ENCODE measurements at regions of chr5 and their contacts with region 1.

Region 1: DNA sequence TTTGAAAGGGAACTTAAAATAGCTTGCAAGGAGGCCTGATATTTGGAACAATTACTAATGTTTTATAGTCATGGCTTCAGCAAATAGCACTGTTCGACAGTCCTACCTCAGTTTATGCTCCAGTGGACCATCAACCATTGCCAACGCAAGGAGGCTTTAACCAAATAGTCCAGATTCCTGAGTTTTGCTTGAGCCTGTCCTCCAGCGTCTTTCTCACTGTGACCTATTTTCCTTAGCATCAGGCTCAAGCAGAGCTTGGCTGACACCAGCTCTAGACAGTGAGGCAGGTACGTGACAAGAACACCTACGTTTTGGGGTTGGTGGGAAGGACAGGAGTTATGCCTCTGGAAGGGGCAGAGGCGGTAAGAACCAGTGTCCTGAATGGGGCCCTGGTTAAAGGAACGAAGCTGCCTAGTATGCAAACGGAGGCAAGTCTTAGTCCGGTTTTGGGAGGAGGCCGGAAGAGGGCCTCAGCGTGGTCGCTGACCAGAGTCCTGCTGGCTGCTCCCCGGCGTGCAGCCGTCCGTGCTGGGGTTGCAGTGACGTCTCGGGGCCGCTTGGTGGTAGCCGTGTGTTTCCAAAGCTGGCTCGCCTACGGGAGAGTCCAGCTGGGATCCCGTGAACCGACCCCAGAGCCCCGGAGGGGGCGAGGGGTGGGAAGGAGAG is 998 bp upstream of the FGF18 start:
- DNase-seq: peak; percentile 94
- H3K4me3 ChIP-seq: peak overlapping the region; percentile 63
- H3K27ac ChIP-seq: no peak overlapping the region
- H3K4me1 ChIP-seq: 0 out of 2 replicates have a peak, but pooled peaks cover 6% of the 10 kb centered on the region
- H3K27me3 ChIP-seq: no peaks in the 10 kb centered on the region

Region 2: GRCh38 chr5:171534043-171534895 is 115.8 kb after region 1 on chr5:
- in situ Hi-C with region 1: no loop called
- DNase-seq: no peak
- H3K4me3 ChIP-seq: no peak overlapping the region
- H3K27ac ChIP-seq: no peak overlapping the region
- H3K4me1 ChIP-seq: peaks cover 5% of the 10 kb centered on the region; the same call in 1 of the 2 replicates
- H3K27me3 ChIP-seq: peaks cover 4% of the 10 kb centered on the region; the same call in 1 of the 2 replicates

Region 3: GRCh38 chr5:171845857-171846256 is 427.4 kb after region 1 on chr5:
- in situ Hi-C with region 1: loop called (anchors 25 kb)
- DNase-seq: peak; percentile 69
- H3K4me3 ChIP-seq: no peak overlapping the region
- H3K27ac ChIP-seq: no peak overlapping the region
- H3K4me1 ChIP-seq: peaks cover 9% of the 10 kb centered on the region
- H3K27me3 ChIP-seq: no peaks in the 10 kb centered on the region

Region 4: DNA sequence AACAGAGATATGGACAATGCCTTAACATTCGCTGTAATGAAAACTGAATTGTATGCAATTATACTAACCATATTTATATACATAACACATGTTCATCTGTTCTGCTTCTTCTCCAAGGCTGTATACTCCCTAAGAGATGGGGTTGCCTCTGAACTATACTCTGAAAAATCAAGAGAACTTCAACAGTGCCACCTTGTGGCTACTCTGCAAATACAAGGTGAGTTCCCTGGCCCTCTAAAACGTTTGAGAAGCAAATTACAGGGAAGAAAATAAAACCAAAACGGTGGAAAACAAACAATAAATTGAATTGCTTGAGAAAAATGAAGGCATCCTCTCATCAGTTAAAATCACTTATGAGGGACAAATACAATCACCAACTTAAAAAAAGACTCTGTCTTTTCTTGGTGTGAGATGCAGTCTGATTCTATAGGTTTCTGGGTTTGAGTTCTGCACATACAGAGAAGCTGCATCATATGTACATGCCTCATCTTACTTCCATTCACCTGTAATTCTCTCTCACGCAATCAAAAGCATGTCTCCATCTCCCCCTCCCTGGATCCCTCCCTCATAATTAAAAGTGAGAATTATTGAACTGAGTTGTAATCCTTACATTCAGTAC is 489.4 kb after region 1 on chr5:
- in situ Hi-C with region 1: loop called (anchors 10 kb)
- DNase-seq: peak; percentile 74
- H3K4me3 ChIP-seq: no peak overlapping the region
- H3K27ac ChIP-seq: no peak overlapping the region
- H3K4me1 ChIP-seq: peaks cover 4% of the 10 kb centered on the region; the same call in 1 of the 2 replicates
- H3K27me3 ChIP-seq: no peaks in the 10 kb centered on the region

Region 5: GRCh38 chr5:172035039-172035438 is 616.6 kb after region 1 on chr5:
- in situ Hi-C with region 1: loop called (anchors 25 kb)
- DNase-seq: no peak
- H3K4me3 ChIP-seq: no peak overlapping the region
- H3K27ac ChIP-seq: no peak overlapping the region
- H3K4me1 ChIP-seq: no peaks in the 10 kb centered on the region
- H3K27me3 ChIP-seq: no peaks in the 10 kb centered on the region

Measured in GM23248 (cell line).